ENCODE measurements at regions of chr12 and their contacts with region 1.

Region 1: DNA sequence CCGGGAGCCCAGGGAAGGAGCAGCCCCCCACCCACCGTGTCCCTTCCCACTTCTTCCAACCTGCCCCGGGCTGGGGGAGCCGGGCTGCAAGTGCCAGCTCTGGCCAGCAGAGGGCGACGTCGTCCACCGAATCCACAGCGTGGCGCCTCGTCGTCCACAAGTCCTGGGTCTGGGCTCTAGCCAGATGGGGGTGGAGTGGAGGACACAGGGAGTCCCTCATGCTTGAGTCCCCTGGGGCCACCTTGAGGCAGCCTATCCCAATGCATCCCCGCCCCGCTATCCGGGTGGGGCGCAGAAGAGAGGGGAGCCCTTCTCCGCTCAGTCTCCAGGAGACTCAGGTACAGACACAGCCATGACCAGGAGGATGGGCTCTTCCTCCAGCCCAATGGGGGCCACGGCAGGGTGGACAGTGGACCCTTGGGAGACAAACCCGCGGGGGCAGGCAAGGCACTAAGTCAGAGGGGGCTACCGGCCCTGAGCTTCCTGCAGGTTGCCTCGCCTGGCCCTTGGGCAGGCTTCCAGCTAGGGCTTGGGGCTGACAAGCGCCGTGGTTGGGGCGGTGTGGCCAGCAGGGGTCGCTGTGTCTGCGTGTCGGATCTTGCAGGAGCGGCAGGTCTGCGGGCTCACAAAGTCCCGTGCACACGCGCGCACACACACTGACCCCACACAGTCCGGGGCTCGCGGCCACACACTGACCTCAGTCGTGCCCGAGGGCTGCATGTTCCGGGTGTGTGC is 5.5 kb downstream of the AQP5 start:
- DNase-seq: no peak
- H3K4me3 ChIP-seq: peak overlapping the region; percentile 56
- CTCF ChIP-seq: peak; percentile 96

Region 2: DNA sequence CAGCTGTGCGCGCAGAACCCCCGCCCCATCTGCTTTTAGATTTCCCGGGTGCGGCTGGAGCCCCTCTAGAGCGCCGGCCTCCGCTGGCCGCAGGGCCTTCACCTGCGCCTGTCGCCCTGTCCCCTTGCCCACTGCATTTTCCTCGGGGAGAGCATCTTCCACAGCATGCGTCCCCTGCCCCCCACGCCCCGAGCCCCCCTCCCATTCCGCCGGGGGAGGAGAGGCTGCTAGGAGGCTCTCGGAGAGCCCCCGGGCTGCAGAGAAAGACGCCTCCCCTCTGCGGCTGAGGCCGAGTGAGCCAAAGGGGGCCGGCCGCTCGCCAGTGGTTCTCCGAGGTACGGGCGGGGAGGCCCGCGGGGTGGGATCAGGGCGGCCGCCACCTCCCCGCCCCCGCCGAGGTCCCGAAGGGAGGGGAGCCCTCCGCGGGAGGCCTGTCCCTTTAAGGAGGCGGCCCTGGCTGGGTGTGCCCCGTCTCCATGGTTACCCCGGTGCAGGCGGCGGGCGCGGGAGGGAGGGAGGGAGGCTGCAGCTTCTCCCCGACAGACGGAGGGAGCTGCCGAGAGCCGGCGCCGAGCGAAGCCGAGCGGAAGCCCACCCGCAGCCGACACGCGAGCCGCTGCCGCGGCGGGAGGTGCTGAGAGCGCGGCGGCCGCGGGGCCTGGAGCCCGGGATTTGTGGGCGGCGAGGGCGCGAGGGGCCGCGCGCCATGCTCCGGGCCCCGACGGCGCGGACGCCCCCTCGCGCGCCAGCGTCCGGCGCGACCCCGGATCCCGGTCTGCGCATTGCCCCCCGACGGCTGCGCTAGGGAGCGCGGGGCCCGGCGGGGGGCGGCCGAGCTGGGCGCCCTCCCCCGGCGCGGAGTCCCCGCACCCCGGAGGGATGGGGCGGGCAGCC is 428.5 kb before region 1 on chr12 and contains the start of gene KCNH3:
- CTCF ChIA-PET with region 1: no interaction called
- POLR2A ChIA-PET with region 1: no interaction called
- DNase-seq: no peak
- H3K4me3 ChIP-seq: peak within 1 kb of the TSS; percentile 38
- CTCF ChIP-seq: no peak

Region 3: DNA sequence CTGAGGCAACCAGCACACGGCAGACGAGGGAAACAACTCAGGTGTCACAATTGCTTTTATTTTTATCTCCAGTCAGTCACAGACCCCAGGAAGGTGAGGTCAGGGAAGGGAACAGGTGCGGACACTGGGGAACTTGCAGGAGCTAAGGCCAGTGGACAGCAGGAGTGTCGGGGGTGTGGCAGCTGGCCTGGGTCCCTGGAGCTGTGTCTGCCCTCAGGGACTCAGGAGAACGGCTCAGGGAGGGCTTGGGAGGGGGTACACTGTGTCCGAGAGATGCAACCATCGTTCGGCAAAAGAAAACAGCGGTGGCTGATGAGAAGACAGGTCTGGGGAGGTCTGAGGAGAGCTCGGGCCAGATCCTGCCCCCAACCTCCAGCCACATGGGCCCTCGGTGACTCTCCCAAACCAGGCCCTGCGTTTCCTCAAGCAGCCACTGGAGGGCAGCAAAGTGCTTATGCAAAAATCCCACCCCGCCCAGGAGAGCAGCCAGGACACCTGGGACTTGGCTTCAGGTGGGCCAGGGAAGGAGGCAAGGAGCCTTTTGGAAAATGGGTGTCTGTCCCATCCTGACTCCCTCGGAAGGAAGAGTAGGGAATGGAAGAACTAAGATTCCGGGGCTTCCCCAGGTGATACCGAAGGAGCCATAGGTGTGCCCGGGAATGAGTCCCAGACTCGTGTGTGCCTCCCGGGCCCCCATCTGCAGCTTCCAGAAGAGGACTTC is 100.2 kb before region 1 on chr12:
- CTCF ChIA-PET with region 1: interaction called, 121 read pairs
- POLR2A ChIA-PET with region 1: no interaction called
- DNase-seq: no peak
- H3K4me3 ChIP-seq: no peak overlapping the region
- CTCF ChIP-seq: peak; percentile 96

Region 4: DNA sequence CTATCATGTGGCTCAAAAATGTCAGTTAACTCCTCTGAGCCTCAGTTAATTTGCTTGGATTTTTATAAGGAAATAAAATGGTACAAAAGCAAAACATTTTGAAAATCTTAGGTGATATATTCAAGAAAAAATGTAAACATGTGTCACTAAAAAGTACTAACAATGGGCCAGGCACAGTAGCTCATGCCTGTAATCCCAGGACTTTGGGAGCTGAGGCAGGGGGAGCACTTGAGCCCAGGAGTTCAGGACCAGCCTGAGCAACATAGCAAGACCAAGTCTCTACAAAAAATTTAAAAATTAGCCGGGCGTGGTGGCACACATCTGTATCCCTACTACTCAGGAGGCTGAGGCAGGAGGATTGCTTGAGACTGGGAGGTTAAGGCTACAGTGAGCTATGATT is 31.2 kb after region 1 on chr12:
- CTCF ChIA-PET with region 1: interaction called, 21 read pairs
- POLR2A ChIA-PET with region 1: no interaction called
- DNase-seq: no peak
- H3K4me3 ChIP-seq: no peak overlapping the region
- CTCF ChIP-seq: no peak

Region 5: GRCh38 chr12:50032639-50033581 is 65.7 kb after region 1 on chr12:
- CTCF ChIA-PET with region 1: interaction called, 119 read pairs
- POLR2A ChIA-PET with region 1: no interaction called
- DNase-seq: no peak
- H3K4me3 ChIP-seq: peak overlapping the region; percentile 23; the same call in 1 of the 2 replicates
- CTCF ChIP-seq: no peak

Region 6: DNA sequence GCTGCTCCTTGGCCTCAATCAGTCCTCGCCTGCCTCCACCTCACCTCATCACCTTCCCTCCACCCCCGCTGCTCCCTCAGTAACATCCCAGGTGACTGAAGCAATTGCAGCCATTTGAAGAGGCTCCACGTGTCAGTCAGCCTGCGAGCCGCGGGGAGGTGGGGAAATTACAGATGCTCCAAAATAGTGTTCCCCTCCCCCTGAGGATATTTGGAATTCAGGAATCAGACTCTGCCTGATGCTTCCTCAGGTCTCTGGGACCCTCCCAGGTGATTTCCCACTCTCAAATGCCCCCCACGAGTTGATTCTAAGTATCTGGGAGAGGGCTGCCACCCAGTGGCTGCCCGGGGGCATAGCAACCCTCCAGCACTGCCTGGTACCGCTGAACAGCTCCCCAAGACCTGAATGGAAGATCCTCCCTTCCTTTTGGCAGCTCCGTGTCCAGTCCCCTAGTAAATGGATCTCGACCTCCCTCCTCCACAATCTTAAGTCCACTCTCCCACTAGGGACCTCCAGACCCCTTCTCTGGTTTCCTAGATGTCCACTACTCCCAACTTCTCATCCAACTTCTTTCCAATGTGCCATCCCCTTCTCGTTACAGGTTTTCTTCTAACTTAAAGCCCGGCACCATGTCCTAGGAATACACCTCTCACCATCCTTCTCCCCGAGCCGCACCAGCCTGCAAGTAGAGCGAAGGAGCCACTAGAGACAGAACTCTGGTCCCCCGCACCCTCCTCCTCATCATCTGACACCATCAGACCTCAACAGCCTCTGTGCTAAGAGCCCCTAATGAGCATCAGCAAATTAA is 88.8 kb after region 1 on chr12:
- CTCF ChIA-PET with region 1: interaction called, 1,042 read pairs
- POLR2A ChIA-PET with region 1: no interaction called
- DNase-seq: no peak
- H3K4me3 ChIP-seq: peak overlapping the region; percentile 29
- CTCF ChIP-seq: peak; percentile 88

Region 7: DNA sequence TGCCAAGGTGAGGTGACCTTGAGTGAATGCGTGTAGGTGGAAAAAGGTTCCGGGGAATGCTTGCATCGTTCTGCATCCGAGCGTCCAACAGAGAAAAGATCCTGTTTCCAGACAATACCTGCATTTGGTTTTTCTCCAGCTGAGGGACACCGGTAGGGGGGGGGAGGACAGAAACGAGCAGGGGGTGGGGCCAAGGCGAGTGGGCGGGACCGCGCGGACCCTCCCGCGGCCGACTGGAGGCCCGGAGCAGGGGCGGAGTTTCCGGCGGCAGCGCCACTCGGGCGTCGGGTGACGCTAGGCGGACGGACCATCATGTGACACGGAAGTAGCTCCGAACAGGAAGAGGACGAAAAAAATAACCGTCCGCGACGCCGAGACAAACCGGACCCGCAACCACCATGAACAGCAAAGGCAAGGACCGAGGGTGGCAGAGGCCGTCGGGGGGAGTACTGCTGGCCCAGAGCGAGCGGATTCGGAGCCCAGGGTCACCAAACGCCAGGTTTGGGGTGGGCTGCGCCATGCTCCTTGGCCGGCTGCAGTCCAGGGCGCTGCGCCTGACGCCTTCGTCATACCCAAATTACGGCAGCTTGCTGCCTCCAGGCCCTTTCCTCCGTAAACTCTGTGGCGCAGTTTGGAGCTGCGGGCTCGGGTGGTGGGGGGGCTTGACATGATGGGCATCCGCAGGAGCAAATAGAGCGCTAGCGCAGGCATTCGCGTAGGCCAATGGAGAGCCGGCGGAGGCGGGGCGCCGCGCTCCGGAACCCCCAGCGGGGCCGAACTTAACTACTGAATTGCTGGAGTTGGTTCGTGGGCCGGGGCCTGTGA is 1271.5 kb after region 1 on chr12 and contains the start of gene DAZAP2:
- CTCF ChIA-PET with region 1: no interaction called
- POLR2A ChIA-PET with region 1: no interaction called
- DNase-seq: peak; percentile 54
- H3K4me3 ChIP-seq: peak within 1 kb of the TSS; percentile 100
- CTCF ChIP-seq: peak; percentile 13